BJ (cell line): ENCODE measurements at regions of chr1 and their contacts with region 1.

Region 1: GRCh38 chr1:16307222-16307621 is 45.1 kb downstream of the FBXO42 start:
- DNase-seq: no peak
- H3K4me3 ChIP-seq: no peak overlapping the region
- H3K27me3 ChIP-seq: no peaks in the 10 kb centered on the region
- CTCF ChIP-seq: no peak

Region 2: GRCh38 chr1:16342331-16343062 is 35.3 kb after region 1 on chr1:
- CTCF ChIA-PET with region 1: no interaction called
- POLR2A ChIA-PET with region 1: interaction called, 19 read pairs
- DNase-seq: no peak
- H3K4me3 ChIP-seq: no peak overlapping the region
- H3K27me3 ChIP-seq: no peaks in the 10 kb centered on the region
- CTCF ChIP-seq: no peak